CD4-positive, alpha-beta memory T cell (primary cell): ENCODE measurements at regions of chr10 and their contacts with region 1.

Region 1: DNA sequence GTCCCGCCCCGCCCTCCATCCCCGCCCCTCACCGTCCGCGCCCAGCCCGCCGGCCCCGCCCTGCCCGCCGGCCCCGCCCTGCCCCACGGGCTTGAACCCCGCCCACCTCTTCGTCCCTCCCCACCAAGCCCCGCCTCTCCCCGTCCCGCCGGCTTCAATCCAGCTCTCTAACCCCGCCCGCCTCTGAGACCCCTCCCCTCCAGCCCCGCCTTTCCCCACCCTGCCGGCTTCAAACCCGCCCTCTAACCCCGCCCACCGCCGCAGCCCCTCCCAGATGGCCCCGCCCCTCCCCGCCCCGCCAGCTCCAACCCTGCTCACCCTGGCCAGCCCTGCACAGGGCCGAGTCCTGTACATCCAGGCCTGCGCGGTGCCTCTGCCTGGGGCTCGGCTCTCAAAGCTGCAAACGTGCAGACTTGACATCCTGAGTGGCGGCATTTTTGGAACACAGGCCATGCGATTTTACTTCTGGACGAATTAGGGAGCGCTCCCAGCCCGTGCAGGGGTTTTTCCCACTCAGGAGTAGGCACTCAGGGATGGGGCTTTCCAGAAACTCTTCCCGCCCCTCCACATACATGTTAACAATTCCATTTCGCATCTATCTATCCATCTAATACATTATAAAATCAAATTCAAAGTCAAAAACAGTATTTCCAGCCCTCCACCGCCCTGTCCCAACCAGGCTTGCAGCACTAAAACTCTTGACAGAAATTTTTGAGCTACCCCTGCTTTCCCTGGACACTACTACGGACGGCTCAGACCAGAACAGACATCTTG is 475 bp upstream of the NMT2 start:
- DNase-seq: peak; percentile 88 to 96 (median 91)
- H3K4me3 ChIP-seq: peak overlapping the region; percentile 1 to 44
- H3K4me3 Mint-ChIP-seq: peak overlapping the region; percentile 85 to 93 (median 88)
- H3K27ac ChIP-seq: peak overlapping the region; percentile 46
- H3K27ac Mint-ChIP-seq: peak overlapping the region; percentile 73 to 97 (median 93)
- H3K4me1 ChIP-seq: peaks cover 74% of the 10 kb centered on the region
- H3K4me1 Mint-ChIP-seq: peaks cover 46 to 67% (median 57%) of the 10 kb centered on the region in 4 donors
- H3K27me3 ChIP-seq: no peaks in the 10 kb centered on the region
- H3K27me3 Mint-ChIP-seq: no peaks in the 10 kb centered on the region

Region 2: GRCh38 chr10:14878266-14879054 is 290.5 kb before region 1 on chr10 and contains the start of gene SUV39H2:
- CTCF ChIA-PET with region 1: no interaction called
- POLR2A ChIA-PET with region 1: interaction called, 5 read pairs
- intact Hi-C with region 1: loop called (anchors 1 kb)
- DNase-seq: peak; percentile 87 to 91 (median 90)
- H3K4me3 ChIP-seq: peak within 1 kb of the TSS; percentile 44 to 88
- H3K4me3 Mint-ChIP-seq: peak within 1 kb of the TSS; percentile 93 to 96 (median 94)
- H3K27ac ChIP-seq: peak within 1 kb of the TSS; percentile 84
- H3K27ac Mint-ChIP-seq: peak within 1 kb of the TSS; percentile 87 to 95 (median 94)
- H3K4me1 ChIP-seq: peaks cover 17% of the 10 kb centered on the region
- H3K4me1 Mint-ChIP-seq: peaks cover 13 to 48% (median 22%) of the 10 kb centered on the region in 4 donors
- H3K27me3 ChIP-seq: no peaks in the 10 kb centered on the region
- H3K27me3 Mint-ChIP-seq: no peaks in the 10 kb centered on the region
- total RNA-seq, gene SUV39H2: 5.0 to 5.7 TPM

Region 3: DNA sequence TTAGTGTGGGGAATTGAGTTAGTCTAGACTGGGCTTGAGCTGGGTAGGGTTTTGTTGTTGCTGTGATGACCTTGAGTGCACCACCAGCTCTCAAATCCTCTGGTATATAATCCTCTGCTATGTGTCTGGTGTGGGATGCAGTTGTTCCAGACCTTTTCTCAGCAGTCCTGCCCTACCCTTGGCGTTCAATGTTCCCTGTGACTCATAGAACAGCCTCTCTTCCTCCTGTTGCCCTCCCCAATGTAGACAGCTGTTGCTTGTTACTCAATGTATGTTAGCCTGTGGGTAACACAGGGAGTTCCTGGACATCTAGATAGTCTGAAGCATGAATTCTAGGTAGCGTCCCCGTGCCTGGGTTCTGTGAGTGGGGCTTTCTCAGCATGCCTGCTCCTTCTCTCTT is 100.2 kb before region 1 on chr10:
- CTCF ChIA-PET with region 1: no interaction called
- POLR2A ChIA-PET with region 1: no interaction called
- intact Hi-C with region 1: no loop called
- DNase-seq: no peak
- H3K4me3 ChIP-seq: no peak overlapping the region
- H3K4me3 Mint-ChIP-seq: no peak overlapping the region
- H3K27ac ChIP-seq: no peak overlapping the region
- H3K27ac Mint-ChIP-seq: no peak overlapping the region
- H3K4me1 ChIP-seq: no peaks in the 10 kb centered on the region
- H3K4me1 Mint-ChIP-seq: no peaks in the 10 kb centered on the region
- H3K27me3 ChIP-seq: no peaks in the 10 kb centered on the region
- H3K27me3 Mint-ChIP-seq: peaks cover 6 to 18% of the 10 kb centered on the region in 2 donors

Region 4: GRCh38 chr10:15097011-15097812 is 71.8 kb before region 1 on chr10 and contains the start of gene RPP38:
- CTCF ChIA-PET with region 1: interaction called, 5 read pairs
- POLR2A ChIA-PET with region 1: interaction called, 9 read pairs
- intact Hi-C with region 1: loop called (anchors 1 kb)
- DNase-seq: peak; percentile 94 to 97 (median 95)
- H3K4me3 ChIP-seq: peak within 1 kb of the TSS; percentile 86 to 97
- H3K4me3 Mint-ChIP-seq: peak within 1 kb of the TSS; percentile 91 to 99 (median 96)
- H3K27ac ChIP-seq: peak within 1 kb of the TSS; percentile 95
- H3K27ac Mint-ChIP-seq: peak within 1 kb of the TSS; percentile 94 to 99 (median 98)
- H3K4me1 ChIP-seq: peaks cover 38% of the 10 kb centered on the region
- H3K4me1 Mint-ChIP-seq: peaks cover 16 to 44% (median 31%) of the 10 kb centered on the region in 4 donors
- H3K27me3 ChIP-seq: no peaks in the 10 kb centered on the region
- H3K27me3 Mint-ChIP-seq: no peaks in the 10 kb centered on the region
- total RNA-seq, gene RPP38: 19.8 to 21.8 TPM

Region 5: DNA sequence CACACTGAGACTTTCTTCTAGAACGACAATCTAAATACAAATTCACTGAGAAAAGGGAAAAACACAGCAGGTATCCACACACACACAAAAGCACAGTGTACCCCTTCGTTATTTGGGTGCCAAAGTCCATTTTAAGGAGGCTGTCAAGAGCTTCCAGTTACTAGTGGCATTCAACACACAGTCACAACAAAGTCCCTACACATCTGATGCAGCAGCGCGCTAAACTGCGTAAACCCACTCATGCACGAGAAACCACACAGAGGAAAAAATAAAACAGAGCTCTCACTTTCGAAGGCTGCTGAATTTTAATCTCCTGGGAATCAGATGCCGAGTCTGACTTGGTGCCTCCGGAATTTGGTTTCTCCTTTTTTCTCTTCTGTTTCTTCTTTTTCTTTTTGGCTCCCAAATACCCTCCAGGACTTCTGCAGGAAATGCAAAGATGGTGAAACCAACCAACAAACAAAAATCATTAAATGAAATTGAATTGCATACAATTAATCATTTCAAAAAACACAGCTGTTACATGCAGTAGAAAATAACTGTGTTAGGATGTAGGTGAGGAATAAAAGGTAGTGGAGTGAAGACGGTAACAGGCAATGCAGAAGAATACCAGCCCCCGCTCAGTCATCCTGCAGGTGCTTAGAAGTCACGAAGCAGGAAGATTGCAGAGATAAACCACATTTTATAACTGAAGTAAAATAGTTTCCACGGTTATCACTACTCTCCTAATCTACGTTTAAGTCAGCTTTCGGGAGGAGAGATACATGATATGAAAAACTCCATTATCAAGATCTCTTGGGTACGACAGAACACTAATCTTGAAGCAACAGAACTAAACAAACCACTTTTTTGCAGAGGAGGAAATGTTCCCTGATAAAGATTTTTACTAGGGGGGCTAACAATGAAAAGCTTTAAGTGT is 27.6 kb before region 1 on chr10:
- CTCF ChIA-PET with region 1: interaction called, 7 read pairs
- POLR2A ChIA-PET with region 1: interaction called, 12 read pairs
- intact Hi-C with region 1: no loop called
- DNase-seq: peak in 1 of 5 donors; percentile 6
- H3K4me3 ChIP-seq: no peak overlapping the region
- H3K4me3 Mint-ChIP-seq: peak overlapping the region in 7 of 8 donors; percentile 0 to 77 (median 63)
- H3K27ac ChIP-seq: no peak overlapping the region
- H3K27ac Mint-ChIP-seq: peak overlapping the region; percentile 22 to 90 (median 57)
- H3K4me1 ChIP-seq: peaks cover 28% of the 10 kb centered on the region
- H3K4me1 Mint-ChIP-seq: peaks cover 34 to 57% (median 48%) of the 10 kb centered on the region in 4 donors
- H3K27me3 ChIP-seq: no peaks in the 10 kb centered on the region
- H3K27me3 Mint-ChIP-seq: no peaks in the 10 kb centered on the region

Region 6: DNA sequence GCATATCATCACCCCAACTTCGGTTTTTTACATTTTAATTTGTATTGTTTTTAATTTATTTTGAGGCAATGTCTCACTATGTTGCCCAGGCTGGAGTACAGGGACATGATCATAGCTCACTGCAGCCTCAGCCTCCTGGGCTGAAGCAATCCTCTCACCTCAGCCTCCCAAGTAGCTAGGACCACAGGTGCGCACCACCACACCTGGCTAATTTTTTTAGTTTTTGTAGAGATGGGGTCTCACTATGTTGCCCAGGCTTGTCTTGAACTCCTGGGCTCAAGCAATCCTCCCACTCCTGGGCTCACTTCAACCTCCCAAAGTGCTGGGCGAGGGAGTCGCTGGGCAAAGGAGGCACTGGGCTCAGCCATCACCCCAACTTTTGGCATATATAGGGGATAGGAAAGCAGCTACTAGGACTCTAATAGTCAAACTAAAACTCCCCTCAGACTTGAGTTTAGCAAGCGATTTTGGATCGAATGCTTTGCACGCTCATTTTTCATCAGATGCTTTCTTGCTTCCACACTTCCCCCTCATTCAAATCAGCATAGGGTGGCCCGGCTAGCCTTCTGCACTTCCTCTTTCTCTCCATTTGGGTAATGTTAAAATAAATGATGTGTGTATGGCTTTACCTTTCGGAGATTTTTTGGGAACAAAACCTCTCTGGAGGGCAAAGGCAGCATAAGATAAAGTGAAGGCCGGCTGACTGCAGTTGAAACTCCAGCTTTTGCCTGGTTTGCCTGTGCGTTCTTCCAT is 20.3 kb after region 1 on chr10:
- CTCF ChIA-PET with region 1: interaction called, 48 read pairs
- POLR2A ChIA-PET with region 1: interaction called, 62 read pairs
- intact Hi-C with region 1: loop called (anchors 1 kb)
- DNase-seq: no peak
- H3K4me3 ChIP-seq: no peak overlapping the region
- H3K4me3 Mint-ChIP-seq: peak overlapping the region in 4 of 8 donors; percentile 6 to 64 (median 29)
- H3K27ac ChIP-seq: no peak overlapping the region
- H3K27ac Mint-ChIP-seq: peak overlapping the region in 5 of 7 donors; percentile 1 to 64 (median 22)
- H3K4me1 ChIP-seq: peaks cover 42% of the 10 kb centered on the region
- H3K4me1 Mint-ChIP-seq: peaks cover 18 to 52% (median 34%) of the 10 kb centered on the region in 4 donors
- H3K27me3 ChIP-seq: no peaks in the 10 kb centered on the region
- H3K27me3 Mint-ChIP-seq: no peaks in the 10 kb centered on the region

Region 7: DNA sequence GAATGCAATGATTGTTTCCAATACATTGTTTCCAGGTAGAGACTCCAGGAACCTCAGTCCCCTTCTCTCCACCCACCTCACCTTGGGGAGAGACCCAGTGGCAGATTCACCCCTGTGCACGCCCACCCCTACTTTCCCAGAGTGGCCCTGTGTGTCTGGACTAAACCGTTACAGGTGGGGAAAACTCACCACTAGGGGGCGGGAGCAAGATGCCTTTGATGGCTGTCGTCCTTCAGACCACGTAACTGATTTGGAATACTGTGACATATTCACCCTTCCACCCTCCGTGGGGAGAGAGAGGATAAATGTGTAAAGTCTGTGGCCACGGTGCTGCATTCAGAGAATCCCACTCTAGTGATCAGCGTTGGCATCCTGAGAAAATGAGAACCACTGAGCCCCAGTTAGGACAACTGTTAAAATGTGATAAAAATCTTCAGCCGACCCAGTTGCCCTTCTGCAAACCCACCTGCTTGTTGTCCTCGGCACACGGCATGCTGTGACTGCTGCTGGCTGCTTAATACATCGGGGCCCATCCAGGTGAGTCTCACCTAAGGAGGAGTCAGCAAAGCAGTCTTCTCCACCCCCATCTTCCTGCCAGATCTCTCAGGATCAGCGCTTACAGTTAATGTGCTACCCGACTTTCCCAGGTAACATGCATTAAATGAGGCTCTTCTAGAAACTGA is 41.0 kb after region 1 on chr10:
- CTCF ChIA-PET with region 1: interaction called, 30 read pairs
- POLR2A ChIA-PET with region 1: interaction called, 93 read pairs
- intact Hi-C with region 1: loop called (anchors 1 kb)
- DNase-seq: peak; percentile 71 to 76 (median 74)
- H3K4me3 ChIP-seq: peak overlapping the region in 1 of 2 donors; percentile 15
- H3K4me3 Mint-ChIP-seq: peak overlapping the region in 7 of 8 donors; percentile 40 to 80 (median 73)
- H3K27ac ChIP-seq: peak overlapping the region; percentile 30
- H3K27ac Mint-ChIP-seq: peak overlapping the region; percentile 81 to 99 (median 92)
- H3K4me1 ChIP-seq: peaks cover 55% of the 10 kb centered on the region
- H3K4me1 Mint-ChIP-seq: peaks cover 38 to 68% (median 51%) of the 10 kb centered on the region in 4 donors
- H3K27me3 ChIP-seq: no peaks in the 10 kb centered on the region
- H3K27me3 Mint-ChIP-seq: no peaks in the 10 kb centered on the region

Region 8: GRCh38 chr10:15370856-15371701 is 202.1 kb after region 1 on chr10 and contains the start of gene FAM171A1:
- CTCF ChIA-PET with region 1: interaction called, 3 read pairs
- POLR2A ChIA-PET with region 1: no interaction called
- intact Hi-C with region 1: loop called (anchors 2 kb)
- DNase-seq: peak; percentile 60 to 69 (median 68)
- H3K4me3 ChIP-seq: peak within 1 kb of the TSS in 1 of 2 donors; percentile 29
- H3K4me3 Mint-ChIP-seq: peak within 1 kb of the TSS; percentile 74 to 86 (median 80)
- H3K27ac ChIP-seq: no peak within 1 kb of the TSS
- H3K27ac Mint-ChIP-seq: peak within 1 kb of the TSS; percentile 35 to 88 (median 68)
- H3K4me1 ChIP-seq: peaks cover 10% of the 10 kb centered on the region
- H3K4me1 Mint-ChIP-seq: peaks cover 1 to 25% (median 11%) of the 10 kb centered on the region in 4 donors
- H3K27me3 ChIP-seq: no peaks in the 10 kb centered on the region
- H3K27me3 Mint-ChIP-seq: peaks cover 7 to 9% of the 10 kb centered on the region in 2 donors
- total RNA-seq, gene FAM171A1: 7.1 to 8.0 TPM